Activated CD8-positive, alpha-beta T cell treated with anti-CD3 and anti-CD28 coated beads for 36 hours (primary cell): ENCODE measurements at regions of chr7 and their contacts with region 1.

Region 1: GRCh38 chr7:101138213-101138870 is 11.4 kb downstream of the SERPINE1 start:
- DNase-seq: peak; percentile 97
- ATAC-seq: peak; percentile 88
- H3K4me3 Mint-ChIP-seq: peak overlapping the region; percentile 62
- H3K27ac Mint-ChIP-seq: peak overlapping the region; percentile 86
- H3K4me1 Mint-ChIP-seq: peaks cover 49% of the 10 kb centered on the region
- H3K27me3 Mint-ChIP-seq: peaks cover 9% of the 10 kb centered on the region
- CTCF ChIP-seq: peak; percentile 94

Region 2: GRCh38 chr7:101017064-101017777 is 121.1 kb before region 1 on chr7:
- CTCF ChIA-PET with region 1: no interaction called
- POLR2A ChIA-PET with region 1: no interaction called
- intact Hi-C with region 1: no loop called
- DNase-seq: peak; percentile 92
- ATAC-seq: peak; percentile 97
- H3K4me3 Mint-ChIP-seq: peak overlapping the region; percentile 77
- H3K27ac Mint-ChIP-seq: peak overlapping the region; percentile 81
- H3K4me1 Mint-ChIP-seq: peaks cover 18% of the 10 kb centered on the region
- H3K27me3 Mint-ChIP-seq: no peaks in the 10 kb centered on the region
- CTCF ChIP-seq: no peak

Region 3: GRCh38 chr7:101126651-101127280 is 11.6 kb before region 1 on chr7 and contains the start of gene SERPINE1:
- CTCF ChIA-PET with region 1: interaction called, 33 read pairs
- POLR2A ChIA-PET with region 1: interaction called, 3 read pairs
- intact Hi-C with region 1: no loop called
- DNase-seq: peak; percentile 82
- ATAC-seq: peak; percentile 84
- H3K4me3 Mint-ChIP-seq: peak within 1 kb of the TSS; percentile 44
- H3K27ac Mint-ChIP-seq: no peak within 1 kb of the TSS
- H3K4me1 Mint-ChIP-seq: peaks cover 36% of the 10 kb centered on the region
- H3K27me3 Mint-ChIP-seq: peaks cover 58% of the 10 kb centered on the region
- CTCF ChIP-seq: peak; percentile 42
- total RNA-seq, gene SERPINE1: 1.2 to 1.3 TPM

Region 4: GRCh38 chr7:101173752-101174244 is 35.5 kb after region 1 on chr7:
- CTCF ChIA-PET with region 1: interaction called, 40 read pairs
- POLR2A ChIA-PET with region 1: no interaction called
- intact Hi-C with region 1: no loop called
- DNase-seq: peak; percentile 82
- ATAC-seq: peak; percentile 89
- H3K4me3 Mint-ChIP-seq: peak overlapping the region; percentile 54
- H3K27ac Mint-ChIP-seq: no peak overlapping the region
- H3K4me1 Mint-ChIP-seq: peaks cover 45% of the 10 kb centered on the region
- H3K27me3 Mint-ChIP-seq: peaks cover 74% of the 10 kb centered on the region
- CTCF ChIP-seq: no peak

Region 5: GRCh38 chr7:101195884-101196283 is 57.5 kb after region 1 on chr7:
- CTCF ChIA-PET with region 1: interaction called, 280 read pairs
- POLR2A ChIA-PET with region 1: no interaction called
- intact Hi-C with region 1: no loop called
- DNase-seq: no peak
- ATAC-seq: no peak
- H3K4me3 Mint-ChIP-seq: no peak overlapping the region
- H3K27ac Mint-ChIP-seq: no peak overlapping the region
- H3K4me1 Mint-ChIP-seq: peaks cover under 1% of the 10 kb centered on the region
- H3K27me3 Mint-ChIP-seq: peaks cover 14% of the 10 kb centered on the region
- CTCF ChIP-seq: no peak